Activated CD4-positive, alpha-beta T cell treated with anti-CD3 and anti-CD28 coated beads, Interleukin-2, amount 10 ng/mL, durations not matched to agents 24 days and 14 days (primary cell): ENCODE measurements at regions of chr9 and their contacts with region 1.

Region 1: GRCh38 chr9:89888685-89889084 is 283.9 kb downstream of the GADD45G start:
- DNase-seq: no peak
- H3K4me3 Mint-ChIP-seq: no peak overlapping the region
- H3K27ac Mint-ChIP-seq: no peak overlapping the region
- H3K4me1 Mint-ChIP-seq: no peaks in the 10 kb centered on the region
- H3K27me3 Mint-ChIP-seq: peaks cover 25% of the 10 kb centered on the region

Region 2: GRCh38 chr9:89902450-89903145 is 13.9 kb after region 1 on chr9:
- intact Hi-C with region 1: loop called (anchors 1 kb)
- DNase-seq: no peak
- H3K4me3 Mint-ChIP-seq: no peak overlapping the region
- H3K27ac Mint-ChIP-seq: no peak overlapping the region
- H3K4me1 Mint-ChIP-seq: no peaks in the 10 kb centered on the region
- H3K27me3 Mint-ChIP-seq: peaks cover 57% of the 10 kb centered on the region

Region 3: DNA sequence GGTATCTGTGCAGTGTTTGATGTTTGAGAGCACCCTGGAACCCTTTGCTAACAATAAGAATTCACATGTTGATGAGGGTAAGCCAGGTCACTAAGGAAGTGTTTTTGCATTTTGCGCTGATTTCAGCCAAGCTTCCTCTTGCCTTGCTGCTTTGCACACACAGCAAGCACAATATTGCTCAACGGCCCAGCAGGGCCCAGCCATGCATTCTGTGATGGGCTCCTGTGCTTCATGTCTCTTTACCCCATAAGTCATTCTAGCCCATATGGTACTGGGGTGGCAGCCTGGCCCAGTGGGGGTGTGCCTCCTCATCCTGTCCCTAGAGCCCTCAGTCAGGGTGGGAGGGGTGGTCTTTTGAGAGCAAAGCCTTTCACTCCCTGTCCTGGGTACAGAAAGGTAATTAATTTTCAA is 197.4 kb after region 1 on chr9:
- intact Hi-C with region 1: no loop called
- DNase-seq: no peak
- H3K4me3 Mint-ChIP-seq: no peak overlapping the region
- H3K27ac Mint-ChIP-seq: no peak overlapping the region
- H3K4me1 Mint-ChIP-seq: no peaks in the 10 kb centered on the region
- H3K27me3 Mint-ChIP-seq: peaks cover 33% of the 10 kb centered on the region

Region 4: GRCh38 chr9:90504486-90504885 is 615.8 kb after region 1 on chr9:
- intact Hi-C with region 1: no loop called
- DNase-seq: no peak
- H3K4me3 Mint-ChIP-seq: no peak overlapping the region
- H3K27ac Mint-ChIP-seq: no peak overlapping the region
- H3K4me1 Mint-ChIP-seq: peaks cover under 1% of the 10 kb centered on the region
- H3K27me3 Mint-ChIP-seq: no peaks in the 10 kb centered on the region